Mammary epithelial cell (primary cell): ENCODE measurements at regions of chr10 and their contacts with region 1.

Region 1: DNA sequence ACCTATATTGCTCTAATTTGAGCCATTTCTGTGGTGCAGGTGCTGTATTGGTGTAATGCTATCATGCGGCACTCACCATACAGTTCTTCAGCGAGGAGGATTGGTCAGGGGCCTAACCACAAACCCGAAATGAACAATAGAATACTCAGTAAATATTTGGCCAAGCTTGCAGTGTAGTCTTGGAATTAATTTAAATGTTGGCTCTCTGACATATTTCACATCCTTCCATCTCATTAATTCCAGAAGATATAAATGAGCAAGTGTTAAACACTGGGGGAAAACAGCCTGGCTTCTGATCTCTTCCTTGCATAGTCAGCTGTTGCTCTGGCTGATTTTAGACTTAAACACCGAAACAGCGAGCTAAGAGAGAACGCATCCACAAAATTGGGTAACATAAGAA is 663.1 kb upstream of the GHITM start:
- DNase-seq: no peak
- H3K4me3 ChIP-seq: no peak overlapping the region
- H3K27ac ChIP-seq: no peak overlapping the region
- H3K4me1 ChIP-seq: no peaks in the 10 kb centered on the region
- H3K27me3 ChIP-seq: no peaks in the 10 kb centered on the region
- CTCF ChIP-seq: no peak

Region 2: DNA sequence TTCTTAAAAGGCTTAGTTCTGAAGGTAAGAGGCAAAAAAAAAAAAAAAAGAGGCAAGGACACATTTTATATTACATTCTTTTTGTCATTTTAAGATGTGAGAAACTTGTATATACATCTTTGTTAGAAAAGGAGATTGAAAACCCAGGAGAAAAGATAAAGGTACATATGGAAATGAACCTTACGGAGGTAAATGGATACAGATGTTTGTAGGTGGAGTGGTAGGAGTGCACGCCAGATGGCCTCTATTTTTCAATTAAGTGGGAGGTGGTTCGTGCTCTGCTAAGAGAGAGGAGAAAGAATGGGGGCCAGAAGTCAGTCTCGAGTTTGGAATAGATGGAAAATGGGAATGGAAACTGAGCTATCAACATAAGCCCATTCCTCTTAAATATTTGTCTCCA is 40.6 kb after region 1 on chr10:
- CTCF ChIA-PET with region 1: no interaction called
- dilution Hi-C with region 1: loop called (anchors 5 kb)
- in situ Hi-C with region 1: no loop called
- intact Hi-C with region 1: no loop called
- DNase-seq: no peak
- H3K4me3 ChIP-seq: no peak overlapping the region
- H3K27ac ChIP-seq: no peak overlapping the region
- H3K4me1 ChIP-seq: no peaks in the 10 kb centered on the region
- H3K27me3 ChIP-seq: no peaks in the 10 kb centered on the region
- CTCF ChIP-seq: no peak

Region 3: DNA sequence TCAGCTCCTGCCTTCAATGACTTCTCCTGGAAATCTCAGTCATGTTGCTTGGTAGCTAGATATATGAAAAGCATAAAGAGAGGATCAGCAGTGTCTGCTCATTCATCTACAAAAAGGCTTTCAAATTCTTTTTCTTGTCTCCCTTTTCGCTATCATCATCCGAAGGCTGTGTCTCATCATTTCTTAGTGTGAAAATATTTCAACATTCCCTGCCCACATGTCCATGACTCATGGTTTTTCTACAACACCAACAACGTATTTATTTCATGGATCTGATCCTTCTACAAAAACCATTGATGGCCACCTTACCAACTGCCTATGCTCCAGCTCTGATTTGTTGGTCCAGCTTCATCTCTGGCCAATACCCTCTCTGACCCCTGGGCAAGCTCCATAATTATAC is 190.6 kb after region 1 on chr10:
- CTCF ChIA-PET with region 1: no interaction called
- dilution Hi-C with region 1: no loop called
- in situ Hi-C with region 1: no loop called
- intact Hi-C with region 1: no loop called
- DNase-seq: no peak
- H3K4me3 ChIP-seq: no peak overlapping the region
- H3K27ac ChIP-seq: no peak overlapping the region
- H3K4me1 ChIP-seq: no peaks in the 10 kb centered on the region
- H3K27me3 ChIP-seq: no peaks in the 10 kb centered on the region
- CTCF ChIP-seq: no peak